Posterior cingulate gyrus (tissue), 11 donors: ENCODE measurements at regions of chr18 and their contacts with region 1.

Region 1: DNA sequence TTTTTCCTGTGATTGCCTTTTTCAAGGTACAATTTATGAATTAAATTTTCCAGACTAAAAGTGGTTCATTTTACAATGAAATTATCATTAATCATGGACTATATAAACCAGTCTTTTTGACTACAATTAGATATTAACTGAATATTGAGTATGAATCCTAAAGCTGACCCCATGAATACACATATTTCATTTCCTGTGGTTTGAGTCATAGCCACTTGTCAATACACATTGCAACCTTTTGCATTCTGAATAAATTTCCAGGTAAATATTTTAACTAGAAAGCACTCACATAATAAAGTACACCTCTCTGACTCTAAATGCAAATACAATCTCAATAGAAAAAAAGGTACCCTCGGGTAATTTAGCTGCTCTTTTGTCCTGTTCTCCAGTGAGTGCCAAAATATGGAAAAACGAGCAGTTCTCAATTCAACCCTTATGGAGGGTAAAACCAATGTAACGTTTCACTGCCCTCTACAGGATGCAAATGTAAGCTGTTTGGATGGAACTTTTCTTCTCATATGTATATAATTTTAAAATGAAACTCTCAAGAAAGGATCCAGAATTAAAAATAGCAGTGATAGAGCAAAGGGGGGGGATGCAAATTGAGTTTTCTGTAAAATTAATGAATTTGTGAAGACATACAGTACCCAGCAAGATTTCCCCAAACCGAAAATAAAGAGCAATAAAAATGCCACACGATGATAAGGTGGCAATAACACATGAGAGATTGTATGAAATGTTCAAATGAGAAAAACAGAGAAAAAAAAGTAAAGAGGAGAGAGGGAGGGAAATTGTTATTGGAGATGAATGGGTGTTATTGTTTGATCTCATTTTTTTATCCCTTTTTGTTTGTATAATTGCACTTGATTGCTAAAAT is 1795.7 kb upstream of the PIK3C3 start:
- DNase-seq: no peak

Region 2: GRCh38 chr18:39841482-39842365 is 317.7 kb before region 1 on chr18:
- intact Hi-C with region 1: loop called (anchors 10 kb)
- DNase-seq: peak; percentile 61 to 96 (median 76)

Region 3: GRCh38 chr18:39966275-39966674 is 193.1 kb before region 1 on chr18:
- intact Hi-C with region 1: no loop called
- DNase-seq: no peak

Region 4: DNA sequence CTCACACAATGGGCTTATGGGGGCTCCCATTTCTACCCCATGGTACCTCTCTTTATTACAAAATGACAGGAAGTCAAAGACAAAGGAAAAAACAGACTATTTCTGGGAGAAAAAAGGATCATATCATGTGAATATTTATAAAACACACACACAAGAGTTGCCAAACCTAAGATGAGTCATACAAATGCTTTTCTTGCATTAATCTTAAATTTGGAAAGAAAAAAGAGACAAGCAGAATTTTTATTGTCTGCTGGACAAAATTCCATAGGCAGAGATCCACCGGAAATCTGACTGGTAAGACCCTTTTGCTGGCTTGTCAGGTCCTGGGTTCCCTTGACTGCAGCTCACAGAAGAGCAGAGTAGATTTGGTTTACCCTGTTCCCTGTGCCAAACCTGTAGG is 63.4 kb after region 1 on chr18:
- intact Hi-C with region 1: loop called (anchors 10 kb)
- DNase-seq: no peak

Region 5: DNA sequence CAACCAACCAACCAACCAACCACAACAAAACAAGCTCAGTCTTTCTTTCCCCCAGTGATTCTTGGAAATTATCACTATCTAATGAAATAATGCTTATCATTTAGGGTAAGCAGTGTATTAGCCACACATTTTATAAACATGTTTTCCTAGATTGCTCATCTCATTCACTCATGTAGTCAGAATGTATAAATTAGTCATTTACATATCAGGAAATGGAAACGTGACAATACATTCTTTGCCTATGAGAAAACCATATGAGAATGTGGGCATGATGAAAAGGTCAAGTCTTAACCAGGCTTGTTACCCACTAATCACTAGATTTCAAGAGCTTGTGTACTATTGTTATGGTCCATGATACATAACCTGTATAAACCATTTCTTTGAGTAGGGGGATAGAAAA is 212.3 kb after region 1 on chr18:
- intact Hi-C with region 1: no loop called
- DNase-seq: no peak